ENCODE measurements at regions of chr2 and their contacts with region 1.

Region 1: DNA sequence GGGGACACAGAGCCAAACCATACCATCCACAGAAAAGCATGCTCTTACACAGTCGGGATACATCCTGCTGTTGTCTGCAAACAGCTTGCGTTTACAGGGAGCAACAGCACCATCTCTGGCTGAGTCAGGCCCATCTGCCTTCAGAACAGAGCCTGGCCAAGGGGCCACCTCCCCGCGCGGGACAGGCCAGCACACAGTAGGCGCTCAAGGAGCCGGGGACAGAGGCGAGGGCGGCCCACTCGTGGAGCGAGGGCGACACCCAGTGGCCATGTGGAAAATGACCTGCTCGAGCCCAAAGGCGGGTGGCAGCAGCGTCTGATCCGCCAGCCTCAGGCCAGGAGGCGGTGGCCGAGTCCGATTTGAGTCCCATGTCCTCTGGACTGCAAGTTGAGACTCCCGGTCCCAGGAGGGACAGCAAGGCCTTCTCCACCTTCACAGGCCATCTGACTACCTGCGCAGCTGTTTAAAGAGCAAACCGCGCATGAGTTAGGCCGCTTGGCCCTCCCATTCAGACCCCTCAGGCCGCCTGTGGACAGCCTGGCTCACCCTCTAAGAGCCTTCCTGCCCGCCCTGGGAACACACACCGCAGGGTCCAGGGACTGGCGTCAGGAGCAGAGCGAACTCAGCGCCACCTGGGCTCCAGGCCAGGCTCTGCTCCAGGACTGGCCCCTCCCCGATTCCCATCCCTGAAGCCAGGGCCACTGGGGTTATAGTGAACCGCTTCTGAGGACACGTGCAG is 38.3 kb downstream of the TTC32 start:
- DNase-seq: peak; percentile 85
- ATAC-seq: peak; percentile 91
- H3K4me3 ChIP-seq: no peak overlapping the region
- H3K27ac ChIP-seq: no peak overlapping the region
- H3K4me1 ChIP-seq: no peaks in the 10 kb centered on the region
- H3K27me3 ChIP-seq: no peaks in the 10 kb centered on the region
- CTCF ChIP-seq: peak; percentile 97

Region 2: GRCh38 chr2:18518116-18519111 is 1345.1 kb before region 1 on chr2:
- intact Hi-C with region 1: loop called (anchors 10 kb)
- DNase-seq: no peak
- ATAC-seq: no peak
- H3K4me3 ChIP-seq: no peak overlapping the region
- H3K27ac ChIP-seq: no peak overlapping the region
- H3K4me1 ChIP-seq: peaks cover 10% of the 10 kb centered on the region
- H3K27me3 ChIP-seq: no peaks in the 10 kb centered on the region
- CTCF ChIP-seq: no peak

Region 3: GRCh38 chr2:19349911-19350677 is 513.4 kb before region 1 on chr2:
- intact Hi-C with region 1: loop called (anchors 10 kb)
- DNase-seq: peak; percentile 82
- ATAC-seq: peak; percentile 53
- H3K4me3 ChIP-seq: peak overlapping the region; percentile 6
- H3K27ac ChIP-seq: no peak overlapping the region
- H3K4me1 ChIP-seq: peaks cover 8% of the 10 kb centered on the region
- H3K27me3 ChIP-seq: peaks cover 43% of the 10 kb centered on the region
- CTCF ChIP-seq: peak; percentile 69

Measured in upper lobe of right lung (tissue), 1 donor.